ENCODE measurements at regions of chr1 and their contacts with region 1.

Region 1: DNA sequence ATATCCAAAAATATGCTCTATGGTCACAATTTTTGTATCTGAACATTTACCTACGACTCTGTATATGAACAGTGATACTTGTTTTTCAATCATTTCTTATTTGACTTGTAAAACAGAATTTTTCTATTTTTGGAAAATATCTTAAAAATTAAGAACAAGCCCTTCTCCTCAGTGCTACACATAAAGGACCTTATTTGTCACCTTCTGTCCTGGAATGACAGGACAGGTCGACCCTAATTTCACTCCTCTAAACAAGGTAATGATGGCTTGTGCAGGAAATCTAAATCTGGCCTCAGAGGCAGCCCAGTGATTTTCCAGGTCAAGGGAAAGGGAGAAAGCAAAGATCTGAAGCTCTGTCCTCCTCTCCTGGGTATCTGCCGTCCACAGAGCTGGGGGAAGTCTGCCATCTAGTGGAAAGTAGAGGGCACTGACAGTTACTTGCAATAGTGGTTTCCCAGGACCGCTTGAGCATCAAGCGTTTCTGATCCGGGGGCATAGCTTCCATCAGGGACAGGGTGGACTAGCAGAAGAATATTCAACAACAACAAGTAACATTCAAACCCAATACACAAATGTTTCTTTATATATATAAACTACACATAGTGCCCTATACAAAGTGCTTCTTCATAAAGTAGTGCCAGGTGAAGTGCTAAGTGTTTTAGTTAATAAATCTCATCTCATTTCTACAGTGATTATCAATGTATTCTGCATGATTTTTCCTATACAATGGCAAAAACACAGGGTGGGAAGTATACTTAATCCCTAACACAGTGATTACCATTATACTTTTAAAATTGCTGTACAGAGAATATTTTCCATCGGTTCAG is 74.6 kb downstream of the SLC25A24 start:
- DNase-seq: peak; percentile 77 to 86 (median 82)
- ATAC-seq: peak; percentile 93
- H3K4me3 ChIP-seq: no peak overlapping the region
- H3K27ac ChIP-seq: no peak overlapping the region
- H3K4me1 ChIP-seq: peaks cover 0 to 6% of the 10 kb centered on the region in 2 experiments; a peak in 2 of 5 replicates
- H3K27me3 ChIP-seq: peaks cover 12 to 24% of the 10 kb centered on the region in 2 experiments
- CTCF ChIP-seq: peak; percentile 94 to 96 (median 94)
- EP300 ChIP-seq: no peak
- POLR2A ChIP-seq: no peak
- RAD21 ChIP-seq: peak; percentile 99

Region 2: GRCh38 chr1:107776900-107777663 is 348.4 kb before region 1 on chr1:
- CTCF ChIA-PET with region 1: interaction called, 53 read pairs
- POLR2A ChIA-PET with region 1: interaction called, 17 read pairs
- in situ Hi-C with region 1: loop called (anchors 5 kb)
- intact Hi-C with region 1: loop called (anchors 1 kb)
- DNase-seq: no peak
- ATAC-seq: no peak
- H3K4me3 ChIP-seq: no peak overlapping the region
- H3K27ac ChIP-seq: no peak overlapping the region
- H3K4me1 ChIP-seq: no peaks in the 10 kb centered on the region
- H3K27me3 ChIP-seq: no peaks in the 10 kb centered on the region
- CTCF ChIP-seq: no peak
- EP300 ChIP-seq: no peak
- POLR2A ChIP-seq: no peak
- RAD21 ChIP-seq: no peak

Region 3: DNA sequence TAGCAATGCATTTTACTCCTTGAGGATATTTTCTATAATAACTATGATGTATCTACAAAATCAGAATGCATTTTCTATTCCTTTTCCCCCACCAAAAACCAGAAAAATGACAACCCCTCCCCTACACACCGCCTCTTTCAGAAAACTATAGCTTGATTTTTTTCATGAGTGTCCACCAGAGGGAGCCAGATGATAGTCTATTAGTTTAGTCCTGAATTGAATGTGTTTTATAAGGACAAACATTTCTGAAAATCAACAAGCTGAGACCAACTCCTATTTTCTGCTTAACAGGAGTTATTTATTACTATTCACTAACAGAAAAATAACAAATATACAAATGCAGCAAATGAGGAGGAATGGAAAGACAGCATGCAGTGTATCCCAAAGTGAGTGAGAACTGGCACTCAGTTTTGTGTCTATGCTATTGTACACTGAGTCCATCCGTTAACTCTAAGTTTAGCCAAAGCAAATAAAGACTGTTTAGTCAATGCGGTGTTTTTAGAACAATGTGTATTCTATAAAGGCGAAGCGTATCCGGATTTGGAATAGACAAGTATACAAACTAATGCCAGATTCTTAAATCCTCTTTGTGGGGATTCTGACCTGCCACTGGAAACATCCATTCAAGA is 343.2 kb before region 1 on chr1:
- CTCF ChIA-PET with region 1: interaction called, 53 read pairs
- POLR2A ChIA-PET with region 1: interaction called, 17 read pairs
- in situ Hi-C with region 1: loop called (anchors 5 kb)
- intact Hi-C with region 1: loop called (anchors 1 kb)
- DNase-seq: peak; percentile 35 to 75 (median 57)
- ATAC-seq: peak; percentile 89
- H3K4me3 ChIP-seq: no peak overlapping the region
- H3K27ac ChIP-seq: no peak overlapping the region
- H3K4me1 ChIP-seq: no peaks in the 10 kb centered on the region
- H3K27me3 ChIP-seq: no peaks in the 10 kb centered on the region
- CTCF ChIP-seq: peak; percentile 58 to 84 (median 60); a peak in 5 of 6 replicates
- EP300 ChIP-seq: no peak
- POLR2A ChIP-seq: no peak
- RAD21 ChIP-seq: peak; percentile 92 to 95

Region 4: GRCh38 chr1:107936498-107937481 is 188.7 kb before region 1 on chr1:
- CTCF ChIA-PET with region 1: no interaction called
- POLR2A ChIA-PET with region 1: no interaction called
- in situ Hi-C with region 1: no loop called
- intact Hi-C with region 1: loop called (anchors 5 kb)
- DNase-seq: no peak
- ATAC-seq: no peak
- H3K4me3 ChIP-seq: no peak overlapping the region
- H3K27ac ChIP-seq: no peak overlapping the region
- H3K4me1 ChIP-seq: no peaks in the 10 kb centered on the region
- H3K27me3 ChIP-seq: no peaks in the 10 kb centered on the region
- CTCF ChIP-seq: no peak
- EP300 ChIP-seq: no peak
- POLR2A ChIP-seq: no peak
- RAD21 ChIP-seq: no peak

Region 5: GRCh38 chr1:108071601-108072000 is 53.9 kb before region 1 on chr1:
- CTCF ChIA-PET with region 1: no interaction called
- POLR2A ChIA-PET with region 1: no interaction called
- in situ Hi-C with region 1: no loop called
- intact Hi-C with region 1: loop called (anchors 5 kb)
- DNase-seq: no peak
- ATAC-seq: peak; percentile 29; the same call in 2 of the 3 replicates
- H3K4me3 ChIP-seq: no peak overlapping the region
- H3K27ac ChIP-seq: no peak overlapping the region
- H3K4me1 ChIP-seq: no peaks in the 10 kb centered on the region; a peak in 1 of 5 replicates
- H3K27me3 ChIP-seq: no peaks in the 10 kb centered on the region
- CTCF ChIP-seq: no peak
- EP300 ChIP-seq: no peak
- POLR2A ChIP-seq: no peak
- RAD21 ChIP-seq: no peak

Measured in K562 (cell line).